ENCODE measurements at regions of chr5 and their contacts with region 1.

Region 1: DNA sequence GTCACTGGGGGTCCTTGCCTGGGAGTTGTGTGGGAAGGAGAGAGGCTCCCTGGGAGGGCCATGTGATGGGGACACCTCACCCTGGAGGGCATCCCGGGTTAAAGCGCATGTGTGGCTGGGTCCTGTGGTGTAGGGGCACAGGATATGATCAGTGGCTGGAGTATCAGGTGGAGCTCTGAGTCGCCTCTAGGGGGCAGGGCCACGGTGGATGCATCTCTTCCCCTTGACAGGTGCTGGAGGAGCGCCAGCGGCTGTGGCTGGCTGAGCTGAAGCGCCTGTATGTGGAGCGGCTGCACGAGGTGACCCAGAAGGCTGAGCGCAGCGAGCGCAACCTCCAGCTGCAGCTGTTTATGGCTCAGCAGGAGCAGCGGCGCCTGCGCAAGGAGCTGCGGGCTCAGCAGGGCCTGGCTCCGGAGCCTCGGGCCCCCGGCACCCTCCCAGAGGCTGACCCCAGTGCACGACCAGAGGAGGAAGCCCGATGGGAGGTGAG is 7.6 kb downstream of the N4BP3 start:
- DNase-seq: peak; percentile 92

Region 2: GRCh38 chr5:178110527-178110926 is 10.4 kb before region 1 on chr5:
- CTCF ChIA-PET with region 1: interaction called, 10 read pairs
- POLR2A ChIA-PET with region 1: no interaction called
- DNase-seq: no peak

Measured in HEK293T (cell line).